Aorta (tissue), 5 donors: ENCODE measurements at regions of chr3 and their contacts with region 1.

Region 1: DNA sequence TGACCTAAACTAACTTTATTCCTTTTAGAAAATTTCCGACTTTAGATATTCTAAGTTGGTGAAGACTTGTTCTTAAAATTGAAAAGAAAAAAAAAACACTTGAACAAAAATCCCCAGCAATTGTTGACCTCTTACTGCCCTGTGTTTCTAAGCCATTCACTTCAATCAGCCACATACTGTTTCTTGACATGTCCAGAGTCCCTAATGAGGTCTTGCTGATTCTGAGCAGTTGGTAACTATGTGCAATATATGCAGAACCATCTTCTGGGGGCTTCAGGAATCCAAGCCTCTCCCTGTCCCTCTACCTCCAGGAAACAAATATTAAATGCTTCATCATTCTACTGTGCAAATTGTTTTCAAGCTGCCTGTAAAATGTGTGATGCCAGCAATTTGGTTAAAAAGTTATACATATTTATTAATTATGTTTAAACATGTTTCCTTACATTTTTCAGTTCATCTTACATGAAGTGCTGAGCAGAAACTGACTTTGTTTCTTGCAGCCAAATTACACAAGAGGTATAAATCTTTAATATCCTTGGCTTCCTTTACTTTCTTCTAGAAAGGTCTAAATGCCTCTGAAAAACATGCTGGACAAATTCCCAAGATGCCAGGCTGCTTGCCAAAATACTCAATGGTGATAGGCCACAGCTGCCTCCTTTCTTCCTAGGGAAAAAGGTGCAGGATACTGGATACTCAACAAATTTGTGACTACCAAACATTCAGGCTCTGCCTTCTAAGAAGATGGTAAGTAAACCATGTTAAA is 19.8 kb upstream of the GYG1 start:
- DNase-seq: peak in 1 of 2 donors; percentile 69
- ATAC-seq: peak; percentile 24
- H3K4me3 ChIP-seq: no peak overlapping the region
- H3K27ac ChIP-seq: peak overlapping the region; percentile 28 to 81
- H3K4me1 ChIP-seq: peaks cover 0 to 1% of the 10 kb centered on the region in 2 donors
- H3K27me3 ChIP-seq: no peaks in the 10 kb centered on the region

Region 2: DNA sequence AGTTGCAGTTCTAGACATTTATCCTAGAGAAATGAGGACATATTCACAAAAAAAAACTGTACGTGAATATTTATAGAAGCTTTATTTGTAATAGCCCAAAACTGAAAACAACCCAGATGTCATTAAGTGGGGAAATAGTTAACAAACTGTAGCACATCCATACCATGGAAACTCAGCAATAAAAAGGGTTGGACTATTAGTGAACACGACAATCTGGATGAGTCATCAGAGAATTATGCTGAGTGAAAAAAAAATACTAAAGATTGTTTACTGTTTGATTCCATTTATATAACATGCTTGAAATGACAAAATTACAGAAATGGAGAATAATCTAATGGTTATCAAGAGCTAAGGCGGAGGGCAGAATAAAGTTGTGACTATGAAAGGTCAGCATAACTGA is 47.0 kb before region 1 on chr3:
- intact Hi-C with region 1: no loop called
- DNase-seq: no peak
- ATAC-seq: no peak
- H3K4me3 ChIP-seq: no peak overlapping the region
- H3K27ac ChIP-seq: no peak overlapping the region
- H3K4me1 ChIP-seq: no peaks in the 10 kb centered on the region
- H3K27me3 ChIP-seq: no peaks in the 10 kb centered on the region

Region 3: GRCh38 chr3:149016669-149017541 is 45.3 kb after region 1 on chr3:
- intact Hi-C with region 1: loop called in 1 of 2 experiments (anchors 5 kb)
- DNase-seq: no peak
- ATAC-seq: peak; percentile 62
- H3K4me3 ChIP-seq: no peak overlapping the region
- H3K27ac ChIP-seq: peak overlapping the region; percentile 28 to 50
- H3K4me1 ChIP-seq: peaks cover 2 to 6% of the 10 kb centered on the region in 2 donors
- H3K27me3 ChIP-seq: no peaks in the 10 kb centered on the region

Region 4: DNA sequence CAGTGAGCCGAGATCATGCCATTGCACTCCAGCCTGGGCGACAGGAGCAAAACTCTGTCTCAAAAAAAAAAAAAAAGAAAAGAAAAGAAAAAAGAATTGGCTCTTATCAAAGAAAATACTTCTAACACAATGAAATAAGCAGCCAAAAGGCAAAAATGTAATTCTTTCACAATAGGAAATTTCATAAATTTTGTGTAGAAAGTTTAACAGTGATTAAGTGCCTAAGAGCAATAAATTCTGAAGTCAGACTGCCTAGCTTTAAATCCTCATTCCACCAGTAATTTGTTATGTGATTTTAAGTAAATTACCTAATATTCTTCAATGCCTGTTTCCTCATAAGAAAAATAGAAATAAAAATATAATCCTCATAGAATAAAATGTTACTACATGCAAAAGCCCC is 90.2 kb after region 1 on chr3:
- intact Hi-C with region 1: loop called in 1 of 2 experiments (anchors 10 kb)
- DNase-seq: no peak
- ATAC-seq: no peak
- H3K4me3 ChIP-seq: no peak overlapping the region
- H3K27ac ChIP-seq: no peak overlapping the region
- H3K4me1 ChIP-seq: no peaks in the 10 kb centered on the region
- H3K27me3 ChIP-seq: no peaks in the 10 kb centered on the region